Transverse colon (tissue), 4 donors: ENCODE measurements at regions of chr18 and their contacts with region 1.

Region 1: DNA sequence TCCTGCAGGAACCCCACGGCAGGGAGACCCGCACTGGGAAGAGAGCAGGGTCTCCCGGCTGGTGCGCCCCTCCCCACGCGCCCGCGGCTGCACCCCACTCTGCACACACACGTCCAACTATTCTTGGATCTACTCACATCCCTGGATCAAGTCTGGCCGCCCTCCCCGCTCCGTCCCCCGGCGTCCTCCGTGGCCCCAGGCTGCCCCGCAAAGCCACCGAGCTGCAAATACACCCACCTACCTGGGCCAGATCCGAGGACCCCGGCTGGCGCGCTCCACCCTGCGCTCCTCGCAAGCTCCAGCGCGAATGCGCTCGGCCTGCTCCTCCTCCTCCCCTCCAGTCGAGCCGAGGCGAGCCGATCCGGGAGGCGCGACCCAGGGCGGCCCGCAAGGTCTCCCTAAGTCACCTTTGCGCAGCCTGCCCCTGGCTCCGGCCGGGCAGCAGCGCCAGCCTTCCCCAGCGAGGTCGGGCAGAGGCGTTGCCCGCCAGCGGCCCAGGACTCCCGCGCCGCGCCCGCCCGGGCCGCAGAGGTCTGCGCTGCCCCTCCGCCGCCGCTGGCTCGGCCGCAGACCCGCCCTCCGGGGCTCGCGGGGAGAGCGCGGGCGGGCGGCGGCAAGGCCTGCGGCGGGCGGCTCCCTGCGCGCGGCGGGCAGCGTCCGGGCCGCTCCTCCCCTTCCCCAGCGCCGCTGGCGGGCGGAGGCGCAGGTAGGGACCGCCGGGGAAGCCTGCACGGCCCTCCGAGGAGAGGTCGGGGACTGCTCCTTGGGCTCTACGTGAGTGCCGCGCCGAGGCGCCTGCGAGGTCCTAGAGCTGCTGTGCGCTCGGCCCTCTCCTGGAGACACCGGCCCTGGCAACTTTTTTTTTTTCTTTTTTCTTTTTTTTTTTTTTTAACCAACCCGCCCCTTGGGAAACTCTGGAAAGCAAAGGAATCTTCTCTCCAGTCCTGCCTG is 126.0 kb downstream of the OSBPL1A start:
- DNase-seq: peak; percentile 73
- H3K4me3 ChIP-seq: peak overlapping the region; percentile 50 to 64 (median 58)
- H3K27ac ChIP-seq: peak overlapping the region; percentile 82 to 92 (median 90)
- H3K4me1 ChIP-seq: peaks cover 21 to 52% (median 37%) of the 10 kb centered on the region in 4 donors
- H3K27me3 ChIP-seq: no peaks in the 10 kb centered on the region
- CTCF ChIP-seq: peak; percentile 15 to 40 (median 39)
- EP300 ChIP-seq: no peak
- POLR2A ChIP-seq: peak; percentile 53

Region 2: DNA sequence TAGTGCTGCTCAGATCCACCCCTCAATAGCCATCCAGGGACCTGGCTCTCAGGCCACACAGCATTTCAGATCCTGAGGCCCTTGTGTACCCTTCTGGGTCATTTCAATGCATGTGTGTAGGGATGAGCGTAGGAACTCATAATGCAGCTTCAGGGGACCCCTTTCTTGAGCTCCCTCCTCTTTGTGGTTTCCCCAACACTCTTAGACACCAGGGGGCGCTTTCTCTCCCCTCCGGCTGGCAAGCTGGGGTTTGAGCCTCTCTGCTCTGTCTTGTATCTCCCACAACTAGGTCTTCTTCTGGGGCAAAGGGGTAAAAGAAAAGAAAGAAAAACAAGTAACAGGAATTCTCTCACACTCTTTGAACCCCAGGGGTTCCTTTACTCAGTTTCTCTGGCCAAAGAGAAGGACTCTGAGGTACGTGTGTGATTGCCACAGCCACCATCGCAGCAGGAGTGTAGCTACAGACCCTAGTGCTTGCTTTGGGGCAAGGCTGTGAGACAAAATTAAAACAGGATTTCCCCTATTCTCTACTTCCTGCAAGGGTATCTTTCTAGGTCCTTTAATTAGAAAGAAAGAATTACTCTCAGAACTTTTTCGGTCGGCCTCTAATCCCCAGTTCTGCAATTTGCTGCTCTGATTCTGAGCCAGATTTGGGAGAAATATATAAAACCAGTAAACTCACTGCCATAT is 94.8 kb before region 1 on chr18:
- in situ Hi-C with region 1: no loop called
- intact Hi-C with region 1: loop called (anchors 10 kb)
- DNase-seq: peak; percentile 71
- H3K4me3 ChIP-seq: no peak overlapping the region
- H3K27ac ChIP-seq: no peak overlapping the region
- H3K4me1 ChIP-seq: peaks cover 0 to 9% (median 0%) of the 10 kb centered on the region in 4 donors
- H3K27me3 ChIP-seq: no peaks in the 10 kb centered on the region
- CTCF ChIP-seq: peak; percentile 62 to 75 (median 70)
- EP300 ChIP-seq: no peak
- POLR2A ChIP-seq: no peak

Region 3: DNA sequence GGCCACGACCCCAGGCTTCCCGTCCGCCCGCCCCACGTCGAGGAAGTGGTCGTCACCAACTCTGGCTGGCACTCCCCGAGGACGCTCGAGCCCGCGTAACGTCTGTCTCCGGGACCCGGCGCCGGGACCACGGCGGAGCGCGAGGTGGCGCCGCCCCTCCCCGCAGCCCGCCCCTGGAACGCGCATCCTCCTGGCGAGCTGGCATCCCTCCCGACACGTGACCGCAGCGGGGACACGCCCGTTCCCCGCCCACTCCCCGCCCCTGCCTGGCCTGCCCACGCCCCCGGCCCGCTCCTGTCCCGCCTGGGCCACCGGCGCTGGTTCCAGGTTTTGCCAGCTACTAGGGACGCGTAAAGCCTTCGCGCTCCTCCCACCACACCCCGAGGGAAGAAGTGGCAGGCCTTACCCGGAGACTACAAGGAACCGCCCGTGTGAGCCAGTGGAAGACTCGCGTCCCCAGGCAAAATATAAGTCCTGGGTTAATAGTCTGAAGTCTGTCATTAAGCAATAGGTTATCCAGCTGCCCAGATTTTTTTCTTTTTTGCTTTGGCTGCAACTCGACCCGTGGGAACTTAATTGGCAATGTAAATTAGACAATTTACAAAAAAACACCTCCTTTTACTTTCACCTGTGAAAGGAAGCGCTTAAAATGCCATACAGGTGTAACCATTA is 126.2 kb after region 1 on chr18 and contains the start of gene OSBPL1A:
- in situ Hi-C with region 1: no loop called
- intact Hi-C with region 1: loop called (anchors 5 kb)
- DNase-seq: peak; percentile 96
- H3K4me3 ChIP-seq: peak within 1 kb of the TSS; percentile 65 to 81 (median 70)
- H3K27ac ChIP-seq: peak within 1 kb of the TSS; percentile 85 to 91 (median 88)
- H3K4me1 ChIP-seq: peaks cover 0 to 15% (median 9%) of the 10 kb centered on the region in 4 donors
- H3K27me3 ChIP-seq: no peaks in the 10 kb centered on the region
- CTCF ChIP-seq: no peak
- EP300 ChIP-seq: no peak
- POLR2A ChIP-seq: peak; percentile 63
- total RNA-seq, gene OSBPL1A: 16.1 to 80.0 (median 61.4) TPM

Region 4: GRCh38 chr18:24672165-24672941 is 400.7 kb after region 1 on chr18:
- in situ Hi-C with region 1: no loop called
- intact Hi-C with region 1: no loop called
- DNase-seq: no peak
- H3K4me3 ChIP-seq: no peak overlapping the region
- H3K27ac ChIP-seq: no peak overlapping the region
- H3K4me1 ChIP-seq: no peaks in the 10 kb centered on the region
- H3K27me3 ChIP-seq: no peaks in the 10 kb centered on the region
- CTCF ChIP-seq: no peak
- EP300 ChIP-seq: no peak
- POLR2A ChIP-seq: no peak